Right ventricle myocardium inferior (tissue), 1 donor: ENCODE measurements at regions of chr22 and their contacts with region 1.

Region 1: GRCh38 chr22:27892064-27892463 is 27.0 kb downstream of the PITPNB start:
- DNase-seq: no peak
- ATAC-seq: peak; percentile 69

Region 2: GRCh38 chr22:27880778-27881394 is 11.2 kb before region 1 on chr22:
- intact Hi-C with region 1: no loop called
- DNase-seq: no peak
- ATAC-seq: peak; percentile 78

Region 3: DNA sequence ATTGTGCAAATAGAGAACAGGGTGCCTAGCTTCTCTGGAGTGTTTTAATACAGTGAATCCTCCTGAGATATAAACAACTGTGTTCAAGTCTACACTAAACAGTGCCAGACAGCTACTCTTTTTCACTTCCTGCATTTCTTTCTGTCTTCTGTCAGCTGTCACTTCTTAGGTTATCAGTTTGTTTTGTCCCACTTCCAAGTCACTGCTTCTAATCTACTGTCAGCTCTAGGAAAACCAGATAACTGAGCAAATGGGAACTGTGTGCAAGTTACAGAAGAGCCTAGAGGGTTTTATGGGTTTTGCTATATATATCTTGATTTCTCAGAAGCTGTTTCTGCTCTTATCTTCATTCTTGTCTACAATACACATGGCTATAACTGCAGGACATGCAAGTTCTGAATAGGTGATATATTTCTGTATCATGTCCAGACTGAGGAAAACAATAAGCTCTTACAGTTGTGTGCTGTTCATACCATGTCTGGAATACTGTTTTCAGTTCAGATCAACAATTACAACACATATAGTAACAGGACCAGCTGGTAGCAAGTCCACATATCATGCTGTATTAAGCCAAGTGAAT is 21.2 kb after region 1 on chr22:
- intact Hi-C with region 1: loop called (anchors 2 kb)
- DNase-seq: no peak
- ATAC-seq: peak; percentile 90

Region 4: DNA sequence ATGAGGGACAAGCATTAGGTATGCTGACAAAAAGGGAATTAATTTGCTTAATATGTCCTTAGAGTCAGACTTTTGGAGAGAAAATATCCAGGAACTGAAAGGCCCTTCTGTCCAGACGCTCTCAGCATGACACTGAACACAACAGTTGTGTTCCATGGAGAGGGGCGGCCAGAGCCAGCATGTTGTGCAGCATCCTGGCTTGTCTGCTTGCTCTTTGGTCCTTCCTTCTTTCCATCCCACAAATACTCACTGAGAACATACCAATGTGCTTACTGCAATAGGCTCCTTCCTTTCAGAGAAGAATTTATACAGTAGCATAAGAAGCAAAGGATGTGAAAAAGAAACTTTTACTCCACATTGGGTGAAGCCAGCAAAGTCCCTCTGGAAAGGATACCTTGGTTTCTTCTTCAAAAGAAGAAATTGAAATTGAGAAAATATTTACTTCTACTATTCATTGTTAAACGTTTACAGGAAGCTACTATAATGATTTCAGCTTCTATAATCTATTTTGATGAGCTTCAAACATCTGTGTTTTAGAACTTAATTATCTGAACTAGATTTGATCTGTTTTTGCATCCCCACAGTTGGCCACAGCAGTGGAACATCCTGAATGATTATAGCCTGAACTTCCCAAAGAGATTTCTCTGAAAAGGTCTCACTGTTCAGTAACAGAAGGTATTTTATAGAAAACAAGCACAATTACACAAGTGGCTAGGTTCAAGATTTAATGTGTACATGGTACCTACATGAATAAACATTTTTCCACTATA is 331.1 kb after region 1 on chr22:
- intact Hi-C with region 1: no loop called
- DNase-seq: no peak
- ATAC-seq: no peak